PC-3 (cell line): ENCODE measurements at regions of chr1 and their contacts with region 1.

Region 1: GRCh38 chr1:243325305-243325890 is 69.6 kb downstream of the SDCCAG8 start:
- DNase-seq: peak; percentile 93
- ATAC-seq: peak; percentile 76
- H3K4me3 ChIP-seq: no peak overlapping the region
- H3K27ac ChIP-seq: no peak overlapping the region
- H3K4me1 ChIP-seq: no peaks in the 10 kb centered on the region
- H3K27me3 ChIP-seq: no peaks in the 10 kb centered on the region
- CTCF ChIP-seq: peak; percentile 99

Region 2: GRCh38 chr1:242467556-242468145 is 857.7 kb before region 1 on chr1:
- CTCF ChIA-PET with region 1: no interaction called
- POLR2A ChIA-PET with region 1: no interaction called
- intact Hi-C with region 1: loop called (anchors 1 kb)
- DNase-seq: peak; percentile 87
- ATAC-seq: peak; percentile 97
- H3K4me3 ChIP-seq: no peak overlapping the region
- H3K27ac ChIP-seq: no peak overlapping the region
- H3K4me1 ChIP-seq: no peaks in the 10 kb centered on the region
- H3K27me3 ChIP-seq: peaks cover 50% of the 10 kb centered on the region
- CTCF ChIP-seq: peak; percentile 96